ENCODE measurements at regions of chr13 and their contacts with region 1.

Region 1: DNA sequence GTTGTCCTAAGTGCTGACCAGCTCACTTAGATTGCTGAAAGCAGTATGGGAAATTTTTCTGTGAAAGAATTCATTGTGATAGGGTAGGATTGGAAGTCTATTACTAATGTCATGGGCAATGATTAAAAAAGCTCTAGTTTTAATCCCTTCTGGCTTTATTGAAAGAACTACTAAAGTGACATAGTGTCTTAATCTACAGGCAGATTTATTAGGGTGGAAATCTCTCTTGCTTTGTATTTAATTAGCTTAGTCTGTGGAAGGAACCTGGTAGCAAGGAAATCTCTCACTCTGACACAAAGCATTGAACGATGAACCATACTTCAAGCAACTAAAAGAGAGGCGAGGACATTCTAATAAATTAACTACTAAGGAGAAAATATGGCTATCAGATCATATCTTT is 1029.2 kb upstream of the PCDH20 start:
- DNase-seq: no peak
- H3K4me3 ChIP-seq: no peak overlapping the region
- H3K27ac ChIP-seq: no peak overlapping the region
- H3K4me1 ChIP-seq: no peaks in the 10 kb centered on the region
- H3K27me3 ChIP-seq: no peaks in the 10 kb centered on the region
- CTCF ChIP-seq: no peak
- POLR2A ChIP-seq: no peak

Region 2: DNA sequence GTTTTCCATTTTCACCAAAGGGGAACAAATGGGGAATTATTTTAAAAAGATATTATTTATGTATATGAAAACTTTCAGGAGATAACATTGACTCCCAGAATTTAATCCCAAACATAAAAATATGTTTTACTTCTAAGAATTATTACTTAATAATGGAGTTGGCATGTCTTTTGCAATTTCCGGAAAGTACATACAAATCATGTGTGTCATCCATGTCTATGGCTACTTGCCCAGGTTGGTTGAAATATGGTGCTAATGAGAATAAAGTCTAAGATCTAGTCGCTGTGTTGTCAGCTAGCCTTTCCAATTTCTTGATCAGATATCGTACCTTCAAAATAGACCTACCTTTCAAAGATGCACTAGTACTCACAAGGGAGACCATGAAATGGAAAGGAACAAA is 25.9 kb before region 1 on chr13:
- CTCF ChIA-PET with region 1: no interaction called
- POLR2A ChIA-PET with region 1: no interaction called
- dilution Hi-C with region 1: no loop called
- intact Hi-C with region 1: loop called (anchors 2 kb)
- DNase-seq: no peak
- H3K4me3 ChIP-seq: no peak overlapping the region
- H3K27ac ChIP-seq: no peak overlapping the region
- H3K4me1 ChIP-seq: no peaks in the 10 kb centered on the region
- H3K27me3 ChIP-seq: no peaks in the 10 kb centered on the region
- CTCF ChIP-seq: no peak
- POLR2A ChIP-seq: no peak

Region 3: GRCh38 chr13:63948045-63948444 is 1503.2 kb after region 1 on chr13:
- CTCF ChIA-PET with region 1: no interaction called
- POLR2A ChIA-PET with region 1: no interaction called
- dilution Hi-C with region 1: no loop called
- intact Hi-C with region 1: no loop called
- DNase-seq: peak; percentile 16
- H3K4me3 ChIP-seq: no peak overlapping the region
- H3K27ac ChIP-seq: no peak overlapping the region
- H3K4me1 ChIP-seq: no peaks in the 10 kb centered on the region
- H3K27me3 ChIP-seq: no peaks in the 10 kb centered on the region
- CTCF ChIP-seq: no peak
- POLR2A ChIP-seq: no peak

Measured in endothelial cell of umbilical vein (primary cell).